Right cardiac atrium (tissue), 5 donors: ENCODE measurements at regions of chr20 and their contacts with region 1.

Region 1: GRCh38 chr20:17536944-17537444 is 5.8 kb upstream of the BFSP1 start:
- DNase-seq: peak; percentile 60 to 83 (median 65)
- ATAC-seq: peak; percentile 94 to 96
- H3K4me3 ChIP-seq: no peak overlapping the region
- H3K27ac ChIP-seq: no peak overlapping the region
- H3K4me1 ChIP-seq: no peaks in the 10 kb centered on the region
- H3K27me3 ChIP-seq: no peaks in the 10 kb centered on the region

Region 2: GRCh38 chr20:17569616-17570346 is 32.8 kb after region 1 on chr20 and contains the start of gene DSTN:
- intact Hi-C with region 1: loop called in 1 of 4 experiments (anchors 5 kb)
- DNase-seq: peak; percentile 95 to 98 (median 97)
- ATAC-seq: peak; percentile 93 to 94
- H3K4me3 ChIP-seq: peak within 1 kb of the TSS; percentile 80
- H3K27ac ChIP-seq: peak within 1 kb of the TSS; percentile 97
- H3K4me1 ChIP-seq: peaks cover 3% of the 10 kb centered on the region
- H3K27me3 ChIP-seq: no peaks in the 10 kb centered on the region
- total RNA-seq, gene DSTN: 720 to 770 (median 741) TPM

Region 3: DNA sequence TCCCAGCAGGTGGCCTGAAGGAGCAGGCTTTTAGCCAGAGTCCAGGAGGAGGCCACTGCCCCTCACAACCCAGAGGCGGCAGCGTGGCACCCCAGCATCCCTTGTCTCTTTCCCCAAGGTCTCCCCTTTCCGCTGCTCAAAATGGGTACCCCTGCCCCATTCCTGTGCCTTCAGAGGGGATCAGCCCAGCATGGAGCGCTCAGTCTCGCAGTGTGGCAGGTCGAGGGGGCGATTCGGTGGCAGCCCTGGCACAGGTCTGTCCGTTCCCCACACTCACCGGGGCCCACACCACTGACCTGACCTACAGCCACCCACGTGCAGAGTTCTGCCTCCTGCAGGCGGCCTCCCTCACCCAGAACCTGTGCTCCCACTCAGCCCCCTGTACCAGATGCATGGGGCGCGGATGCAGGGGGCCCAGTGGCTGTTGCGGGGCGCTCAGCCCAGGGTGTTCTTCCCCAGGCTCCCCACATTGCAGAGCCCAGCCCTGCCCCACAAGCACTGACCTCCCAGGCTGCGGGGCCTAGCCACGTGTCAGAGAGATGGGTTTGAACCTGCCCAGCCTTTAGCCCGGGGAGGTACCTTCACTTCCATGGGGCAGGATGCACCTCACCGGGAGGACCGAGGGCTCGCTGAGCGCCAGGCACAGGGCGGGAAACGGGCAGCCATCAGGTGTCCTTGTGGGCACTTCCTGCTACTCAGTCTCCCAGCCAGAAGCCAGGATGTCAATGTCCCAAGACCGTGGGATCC is 74.7 kb after region 1 on chr20:
- intact Hi-C with region 1: loop called in 3 of 4 experiments (anchors 5 kb)
- DNase-seq: peak in 2 of 3 donors; percentile 32 to 64
- ATAC-seq: peak; percentile 0 to 1
- H3K4me3 ChIP-seq: no peak overlapping the region
- H3K27ac ChIP-seq: no peak overlapping the region
- H3K4me1 ChIP-seq: peaks cover 8% of the 10 kb centered on the region
- H3K27me3 ChIP-seq: no peaks in the 10 kb centered on the region

Region 4: GRCh38 chr20:17617551-17618223 is 80.7 kb after region 1 on chr20:
- intact Hi-C with region 1: loop called (anchors 2 to 5 kb)
- DNase-seq: peak; percentile 57 to 89 (median 85)
- ATAC-seq: peak; percentile 17 to 49
- H3K4me3 ChIP-seq: no peak overlapping the region
- H3K27ac ChIP-seq: no peak overlapping the region
- H3K4me1 ChIP-seq: peaks cover 8% of the 10 kb centered on the region
- H3K27me3 ChIP-seq: no peaks in the 10 kb centered on the region

Region 5: DNA sequence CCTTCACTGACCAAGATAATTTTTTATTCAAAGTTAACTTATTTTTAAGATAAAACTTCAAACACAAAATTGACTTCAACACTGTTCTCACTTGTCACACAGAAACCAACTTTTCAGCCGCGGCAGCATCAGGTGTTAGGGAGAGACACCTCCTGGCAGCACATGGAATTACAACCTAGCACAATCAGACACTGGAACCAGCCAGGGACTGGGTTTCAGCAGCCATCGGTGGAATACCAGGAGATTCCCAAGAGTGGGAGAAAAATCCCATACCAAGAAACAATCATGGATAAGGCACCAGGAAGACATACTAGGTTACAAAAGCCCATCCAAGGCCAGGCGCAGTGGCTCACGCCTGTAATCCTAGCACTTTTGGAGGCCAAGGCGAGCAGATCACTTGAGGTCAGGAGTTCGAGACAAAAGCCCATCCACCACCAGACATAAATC is 361.6 kb after region 1 on chr20:
- intact Hi-C with region 1: loop called (anchors 5 to 10 kb)
- DNase-seq: peak; percentile 69 to 85 (median 72)
- ATAC-seq: peak; percentile 47 to 56
- H3K4me3 ChIP-seq: no peak overlapping the region
- H3K27ac ChIP-seq: no peak overlapping the region
- H3K4me1 ChIP-seq: peaks cover 3% of the 10 kb centered on the region
- H3K27me3 ChIP-seq: no peaks in the 10 kb centered on the region

Region 6: GRCh38 chr20:17904027-17904426 is 367.0 kb after region 1 on chr20:
- intact Hi-C with region 1: loop called (anchors 5 to 10 kb)
- DNase-seq: no peak
- ATAC-seq: no peak
- H3K4me3 ChIP-seq: no peak overlapping the region
- H3K27ac ChIP-seq: no peak overlapping the region
- H3K4me1 ChIP-seq: no peaks in the 10 kb centered on the region
- H3K27me3 ChIP-seq: no peaks in the 10 kb centered on the region